OCI-LY7 (cell line): ENCODE measurements at regions of chr16 and their contacts with region 1.

Region 1: DNA sequence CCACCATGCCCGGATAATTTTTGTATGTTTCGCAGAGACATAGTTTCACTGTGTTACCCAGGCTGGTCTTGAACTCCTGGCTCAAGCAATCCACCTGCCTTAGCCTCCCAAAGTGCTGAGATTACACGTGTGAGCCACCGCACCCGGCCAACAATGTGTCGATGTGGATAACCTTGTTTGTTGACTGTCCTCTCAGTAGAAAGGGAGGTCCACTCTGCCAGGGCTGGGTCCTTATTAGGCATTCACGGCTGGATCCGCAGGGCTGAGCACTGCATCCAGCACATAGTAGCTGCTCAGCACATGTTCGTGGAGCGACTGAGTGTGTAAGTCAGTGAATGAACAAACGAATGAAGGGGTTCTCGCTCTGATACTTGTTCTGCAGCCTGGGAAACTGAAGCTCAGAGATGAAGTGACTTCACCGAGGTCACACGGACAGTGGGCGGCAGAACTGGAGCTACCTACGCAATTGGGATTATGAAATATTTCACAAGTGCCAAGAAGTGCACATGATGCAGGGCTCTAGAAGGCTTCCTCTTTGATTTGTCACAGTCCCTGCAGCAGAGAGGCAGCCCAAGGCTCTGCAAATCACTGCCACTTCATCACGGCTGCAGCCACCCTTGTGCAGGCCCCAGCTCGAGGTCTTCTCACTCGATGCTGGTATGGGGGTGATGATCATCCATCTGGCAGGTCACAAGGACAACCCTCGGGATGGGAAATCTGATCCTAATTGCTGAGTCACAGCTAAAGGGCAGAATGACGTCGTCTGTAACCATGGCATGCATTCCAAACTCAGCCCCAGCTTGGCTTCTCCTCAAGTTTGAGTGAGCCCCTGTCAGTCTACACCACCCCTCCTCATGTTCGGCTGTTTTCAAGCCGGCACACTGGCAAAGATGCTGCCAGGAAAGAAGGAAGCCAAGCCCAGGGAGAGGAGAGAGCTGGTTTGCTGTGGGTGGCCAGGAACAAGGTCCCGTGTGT is 28.0 kb upstream of the SNN start:
- DNase-seq: no peak
- H3K4me3 ChIP-seq: no peak overlapping the region
- H3K27ac ChIP-seq: no peak overlapping the region
- H3K4me1 ChIP-seq: peaks cover 34% of the 10 kb centered on the region
- CTCF ChIP-seq: no peak

Region 2: GRCh38 chr16:11356573-11357331 is 283.5 kb before region 1 on chr16:
- CTCF ChIA-PET with region 1: no interaction called
- POLR2A ChIA-PET with region 1: no interaction called
- intact Hi-C with region 1: no loop called
- DNase-seq: peak; percentile 78
- H3K4me3 ChIP-seq: peak overlapping the region; percentile 39
- H3K27ac ChIP-seq: peak overlapping the region; percentile 91
- H3K4me1 ChIP-seq: peaks cover 85% of the 10 kb centered on the region
- CTCF ChIP-seq: peak; percentile 98

Region 3: DNA sequence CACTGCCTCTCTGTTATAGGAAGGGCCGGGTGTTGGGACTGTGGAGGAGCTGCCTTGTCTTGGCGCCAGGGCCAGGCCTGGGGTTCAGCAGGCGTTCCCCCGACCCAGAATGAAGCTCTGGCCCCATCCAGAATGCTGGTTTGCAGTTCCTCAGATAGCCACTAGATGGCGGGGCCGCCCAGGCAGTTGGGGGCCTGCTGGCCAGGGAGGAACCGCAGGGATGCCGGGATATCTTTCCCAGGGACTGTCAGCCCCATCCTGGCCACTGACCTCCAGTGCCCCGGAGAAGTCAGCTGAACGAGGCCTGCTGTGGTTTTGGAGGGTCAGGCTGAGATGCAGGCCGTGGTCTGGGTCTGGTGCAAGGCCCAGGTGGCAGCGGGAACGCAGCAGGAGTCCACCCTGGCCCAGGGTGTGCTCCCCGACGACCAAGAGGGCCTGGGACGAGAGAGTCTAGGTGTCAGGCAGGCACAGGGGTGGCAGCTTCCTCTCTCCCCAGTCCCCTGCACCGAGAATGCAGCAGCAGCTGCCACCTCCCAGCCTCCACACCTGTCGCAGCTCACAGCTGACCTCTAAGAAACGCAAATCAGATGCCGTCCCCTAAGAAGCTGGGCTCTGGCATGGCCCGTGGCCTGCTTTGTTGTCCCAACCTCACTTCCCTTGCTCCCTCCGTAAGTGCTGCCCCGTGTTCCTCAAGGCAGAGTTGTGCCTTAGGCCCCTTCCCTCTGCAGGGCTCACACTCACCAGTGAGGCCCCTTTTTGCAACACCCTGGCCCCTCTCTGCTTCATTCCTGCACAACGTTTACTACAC is 243.8 kb before region 1 on chr16:
- CTCF ChIA-PET with region 1: no interaction called
- POLR2A ChIA-PET with region 1: no interaction called
- intact Hi-C with region 1: loop called (anchors 2 kb)
- DNase-seq: peak; percentile 66
- H3K4me3 ChIP-seq: no peak overlapping the region
- H3K27ac ChIP-seq: no peak overlapping the region
- H3K4me1 ChIP-seq: no peaks in the 10 kb centered on the region
- CTCF ChIP-seq: peak; percentile 98

Region 4: GRCh38 chr16:11407047-11407982 is 232.9 kb before region 1 on chr16:
- CTCF ChIA-PET with region 1: interaction called, 7 read pairs
- POLR2A ChIA-PET with region 1: interaction called, 3 read pairs
- intact Hi-C with region 1: loop called (anchors 1 kb)
- DNase-seq: peak; percentile 79
- H3K4me3 ChIP-seq: no peak overlapping the region
- H3K27ac ChIP-seq: no peak overlapping the region
- H3K4me1 ChIP-seq: peaks cover 5% of the 10 kb centered on the region
- CTCF ChIP-seq: peak; percentile 96

Region 5: GRCh38 chr16:11535471-11535870 is 104.7 kb before region 1 on chr16:
- CTCF ChIA-PET with region 1: interaction called, 4 read pairs
- POLR2A ChIA-PET with region 1: no interaction called
- intact Hi-C with region 1: loop called (anchors 1 kb)
- DNase-seq: no peak
- H3K4me3 ChIP-seq: no peak overlapping the region
- H3K27ac ChIP-seq: no peak overlapping the region
- H3K4me1 ChIP-seq: peaks cover 7% of the 10 kb centered on the region
- CTCF ChIP-seq: no peak

Region 6: GRCh38 chr16:11586856-11587642 is 53.2 kb before region 1 on chr16 and contains the start of gene LITAF:
- CTCF ChIA-PET with region 1: no interaction called
- POLR2A ChIA-PET with region 1: interaction called, 12 read pairs
- intact Hi-C with region 1: no loop called
- DNase-seq: peak; percentile 55
- H3K4me3 ChIP-seq: peak within 1 kb of the TSS; percentile 70
- H3K27ac ChIP-seq: no peak within 1 kb of the TSS
- H3K4me1 ChIP-seq: peaks cover 55% of the 10 kb centered on the region
- CTCF ChIP-seq: 0 out of 2 replicates have a peak, but pooled peaks have one; percentile 34
- total RNA-seq, gene LITAF: 12.2 and 18.4 TPM in 2 replicates

Region 7: DNA sequence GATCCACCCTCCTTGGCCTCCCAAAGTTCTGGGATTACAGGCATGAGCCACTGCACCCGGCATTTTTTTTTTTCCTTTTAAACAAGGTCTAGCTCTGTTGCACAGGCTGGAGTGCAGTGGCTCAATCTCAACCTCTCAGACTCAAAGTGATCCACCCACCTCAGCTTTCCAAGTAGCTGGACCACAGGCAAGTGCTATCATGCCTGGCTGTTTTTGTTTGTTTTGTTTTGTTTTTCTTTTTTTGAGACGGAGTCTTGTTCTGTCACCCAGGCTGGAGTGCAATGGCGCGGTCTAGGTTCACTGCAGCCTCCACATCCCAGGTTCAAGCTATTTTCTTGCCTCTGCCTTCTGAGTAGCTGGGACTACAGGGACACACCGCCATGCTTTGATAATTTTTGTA is 175.9 kb after region 1 on chr16:
- CTCF ChIA-PET with region 1: interaction called, 4 read pairs
- POLR2A ChIA-PET with region 1: no interaction called
- intact Hi-C with region 1: loop called (anchors 2 kb)
- DNase-seq: no peak
- H3K4me3 ChIP-seq: no peak overlapping the region
- H3K27ac ChIP-seq: no peak overlapping the region
- H3K4me1 ChIP-seq: peaks cover 11% of the 10 kb centered on the region
- CTCF ChIP-seq: no peak